Aorta (tissue), 5 donors: ENCODE measurements at regions of chr22 and their contacts with region 1.

Region 1: GRCh38 chr22:33726294-33726734 is 194.0 kb downstream of the LARGE1 start:
- DNase-seq: no peak
- ATAC-seq: peak; percentile 69
- H3K4me3 ChIP-seq: no peak overlapping the region
- H3K27ac ChIP-seq: peak overlapping the region in 1 of 2 donors; percentile 45
- H3K4me1 ChIP-seq: peaks cover 2 to 6% of the 10 kb centered on the region in 2 donors
- H3K27me3 ChIP-seq: no peaks in the 10 kb centered on the region

Region 2: GRCh38 chr22:33271390-33272161 is 454.7 kb before region 1 on chr22:
- intact Hi-C with region 1: loop called in 1 of 2 experiments (anchors 10 kb)
- DNase-seq: peak; percentile 82 to 89
- ATAC-seq: peak; percentile 86
- H3K4me3 ChIP-seq: no peak overlapping the region
- H3K27ac ChIP-seq: peak overlapping the region in 1 of 2 donors; percentile 45
- H3K4me1 ChIP-seq: no peaks in the 10 kb centered on the region
- H3K27me3 ChIP-seq: no peaks in the 10 kb centered on the region

Region 3: GRCh38 chr22:33841281-33842005 is 115.1 kb after region 1 on chr22:
- intact Hi-C with region 1: loop called in 1 of 2 experiments (anchors 10 kb)
- DNase-seq: no peak
- ATAC-seq: peak; percentile 63
- H3K4me3 ChIP-seq: peak overlapping the region in 1 of 2 donors; percentile 36
- H3K27ac ChIP-seq: peak overlapping the region; percentile 67 to 82
- H3K4me1 ChIP-seq: peaks cover 8 to 12% of the 10 kb centered on the region in 2 donors
- H3K27me3 ChIP-seq: no peaks in the 10 kb centered on the region

Region 4: DNA sequence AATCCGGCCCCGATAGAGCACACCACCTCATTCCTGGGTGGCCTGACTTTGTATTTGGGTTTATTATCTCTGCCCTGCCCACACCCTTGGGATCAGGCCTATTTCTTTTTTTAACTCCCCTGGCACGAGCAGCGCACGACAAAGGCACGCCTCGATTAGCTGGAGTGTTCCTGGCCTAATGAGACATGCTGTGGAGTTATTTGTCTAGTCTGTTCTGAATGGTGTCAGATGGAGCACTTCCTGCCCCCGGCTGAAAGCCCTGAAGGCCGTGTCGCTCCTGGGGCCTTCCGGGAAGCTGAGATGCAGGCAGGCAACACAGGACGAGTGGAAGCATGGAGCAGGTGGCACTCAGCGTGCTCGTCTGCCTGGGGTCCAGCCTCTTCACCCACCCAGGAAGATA is 146.9 kb after region 1 on chr22:
- intact Hi-C with region 1: loop called in 1 of 2 experiments (anchors 10 kb)
- DNase-seq: no peak
- ATAC-seq: peak; percentile 50
- H3K4me3 ChIP-seq: no peak overlapping the region
- H3K27ac ChIP-seq: peak overlapping the region; percentile 2 to 66
- H3K4me1 ChIP-seq: peaks cover 1 to 6% of the 10 kb centered on the region in 2 donors
- H3K27me3 ChIP-seq: no peaks in the 10 kb centered on the region